Activated B cell treated with CpG ODN at 0.5 μM for 24 hours (primary cell): ENCODE measurements at regions of chr19 and their contacts with region 1.

Region 1: DNA sequence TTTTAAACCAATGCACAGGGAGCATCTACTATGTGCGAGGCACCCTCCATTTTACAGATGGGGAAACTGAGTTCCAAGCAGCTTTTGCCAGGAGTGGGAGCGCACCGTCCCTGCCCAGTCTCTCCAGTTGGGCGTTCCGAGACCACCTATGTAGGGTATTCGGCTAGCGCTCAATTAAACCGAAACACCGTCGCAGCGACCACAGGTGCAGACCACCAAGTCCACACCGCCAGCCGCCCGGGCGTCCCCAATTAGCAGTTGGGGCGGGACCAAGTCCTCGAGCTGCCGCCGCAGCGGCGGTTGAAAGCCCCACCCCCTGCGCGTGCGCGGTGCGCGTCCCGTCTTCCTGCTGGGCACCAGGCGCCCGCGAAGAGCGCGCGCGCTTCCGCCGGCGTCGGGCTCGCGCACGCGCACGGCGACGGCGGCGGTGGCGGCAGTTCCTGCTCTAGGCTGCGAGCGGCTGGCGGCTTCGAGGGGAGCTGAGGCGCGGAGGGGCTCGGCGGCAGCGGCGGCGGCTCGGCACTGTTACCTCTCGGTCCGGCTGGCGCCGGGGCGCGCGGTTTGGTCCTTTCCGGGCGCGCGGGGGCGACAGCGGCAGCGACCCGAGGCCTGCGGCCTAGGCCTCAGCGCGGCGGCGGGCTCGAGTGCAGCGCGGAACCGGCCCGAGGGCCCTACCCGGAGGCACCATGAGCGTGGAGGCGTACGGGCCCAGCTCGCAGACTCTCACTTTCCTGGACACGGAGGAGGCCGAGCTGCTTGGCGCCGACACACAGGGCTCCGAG is at the start of gene UPF1:
- DNase-seq: peak; percentile 97
- ATAC-seq: peak; percentile 84
- H3K4me3 Mint-ChIP-seq: peak within 1 kb of the TSS; percentile 90
- H3K27ac Mint-ChIP-seq: peak within 1 kb of the TSS; percentile 77
- H3K4me1 Mint-ChIP-seq: peaks cover 35% of the 10 kb centered on the region
- H3K27me3 Mint-ChIP-seq: no peaks in the 10 kb centered on the region
- CTCF ChIP-seq: no peak
- total RNA-seq, gene UPF1: 93.2 and 107 TPM in 2 replicates

Region 2: DNA sequence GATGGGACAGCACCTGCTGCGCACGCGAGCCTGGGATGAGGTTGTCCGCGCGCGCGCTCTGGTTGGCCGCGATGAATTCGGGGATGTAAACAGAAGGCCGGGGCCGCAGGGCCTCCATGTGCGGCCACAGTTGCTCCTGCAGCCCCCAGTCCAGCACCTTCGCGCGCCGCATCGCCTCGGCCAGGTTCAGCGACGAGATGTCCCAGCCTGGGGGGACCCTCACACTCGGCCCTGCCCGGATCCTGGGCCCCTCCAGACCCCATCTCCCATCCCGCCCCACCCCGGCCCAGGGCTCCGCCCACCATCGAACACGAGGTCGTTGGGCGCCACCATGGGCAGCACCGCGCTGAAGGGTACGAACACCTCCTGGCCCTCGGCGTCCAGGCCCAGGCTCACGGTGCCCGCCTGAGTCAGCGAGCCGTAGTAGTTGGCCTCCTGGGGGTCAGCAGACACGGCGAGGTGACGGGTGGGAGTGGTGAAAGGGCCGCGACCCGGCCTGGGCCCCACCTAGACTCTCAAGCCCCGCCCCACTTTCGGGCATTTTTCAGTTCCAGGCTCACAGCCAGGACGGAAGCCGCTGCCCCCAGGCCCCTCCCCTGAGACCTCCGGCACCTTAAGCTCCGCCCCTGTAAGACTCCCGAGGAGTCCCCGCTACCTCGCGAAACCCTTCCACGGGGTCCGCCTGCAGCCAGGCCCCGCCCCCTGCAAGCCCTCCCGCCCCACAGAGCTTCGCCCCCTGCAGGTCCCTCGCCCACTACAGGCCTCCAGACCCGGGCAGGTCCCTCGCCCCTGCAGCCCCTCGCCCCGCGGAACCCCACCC is 394.8 kb before region 1 on chr19:
- CTCF ChIA-PET with region 1: no interaction called
- POLR2A ChIA-PET with region 1: interaction called, 3 read pairs
- intact Hi-C with region 1: loop called (anchors 5 kb)
- DNase-seq: peak; percentile 71
- ATAC-seq: peak; percentile 72
- H3K4me3 Mint-ChIP-seq: peak overlapping the region; percentile 78
- H3K27ac Mint-ChIP-seq: no peak overlapping the region
- H3K4me1 Mint-ChIP-seq: peaks cover 38% of the 10 kb centered on the region
- H3K27me3 Mint-ChIP-seq: no peaks in the 10 kb centered on the region
- CTCF ChIP-seq: no peak

Region 3: DNA sequence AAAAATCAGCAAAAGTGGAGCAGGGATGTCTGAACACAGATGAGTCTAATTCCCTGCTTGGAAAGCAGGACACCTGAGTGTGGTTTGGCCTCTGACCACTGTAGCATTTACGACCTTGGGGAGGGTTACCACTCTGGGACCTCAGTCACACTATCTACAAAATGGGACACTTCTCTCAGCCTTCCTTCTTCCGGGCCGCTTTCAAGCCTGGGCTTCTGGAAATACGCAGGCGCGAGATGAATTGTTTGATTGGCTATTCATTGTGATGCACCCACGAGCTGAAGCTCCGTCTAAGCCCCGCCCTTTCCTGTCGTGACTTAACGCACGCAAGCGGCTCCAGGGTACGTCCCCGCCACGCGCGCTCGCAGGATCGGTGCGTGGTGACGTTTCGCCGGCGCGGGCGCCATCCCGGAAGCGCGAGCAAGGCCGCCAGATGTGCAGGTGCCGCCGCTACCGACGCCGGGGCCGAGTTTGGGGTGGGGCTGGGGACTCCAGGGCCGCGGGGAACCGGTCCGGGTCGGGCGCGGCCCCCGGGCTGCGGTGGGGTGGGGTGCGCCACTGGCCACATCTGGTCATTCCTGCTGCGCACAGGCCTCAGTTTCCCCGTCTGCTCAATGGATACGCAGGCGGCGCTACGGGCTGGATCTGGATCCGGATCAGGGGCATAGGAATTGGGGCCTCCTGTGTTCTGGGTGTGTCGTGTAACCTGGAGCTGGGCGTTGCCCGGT is 274.1 kb before region 1 on chr19 and contains the start of gene KXD1:
- CTCF ChIA-PET with region 1: no interaction called
- POLR2A ChIA-PET with region 1: interaction called, 11 read pairs
- intact Hi-C with region 1: no loop called
- DNase-seq: peak; percentile 93
- ATAC-seq: peak; percentile 99
- H3K4me3 Mint-ChIP-seq: peak within 1 kb of the TSS; percentile 87
- H3K27ac Mint-ChIP-seq: peak within 1 kb of the TSS; percentile 89
- H3K4me1 Mint-ChIP-seq: peaks cover 25% of the 10 kb centered on the region
- H3K27me3 Mint-ChIP-seq: no peaks in the 10 kb centered on the region
- CTCF ChIP-seq: no peak
- total RNA-seq, gene KXD1: 82.2 and 88.8 TPM in 2 replicates

Region 4: GRCh38 chr19:18571564-18572300 is 260.0 kb before region 1 on chr19 and contains the start of gene UBA52:
- CTCF ChIA-PET with region 1: no interaction called
- POLR2A ChIA-PET with region 1: interaction called, 15 read pairs
- intact Hi-C with region 1: no loop called
- DNase-seq: peak; percentile 100
- ATAC-seq: peak; percentile 93
- H3K4me3 Mint-ChIP-seq: peak within 1 kb of the TSS; percentile 94
- H3K27ac Mint-ChIP-seq: peak within 1 kb of the TSS; percentile 93
- H3K4me1 Mint-ChIP-seq: peaks cover 30% of the 10 kb centered on the region
- H3K27me3 Mint-ChIP-seq: no peaks in the 10 kb centered on the region
- CTCF ChIP-seq: no peak
- total RNA-seq, gene UBA52: 1,962 and 2,164 TPM in 2 replicates

Region 5: GRCh38 chr19:18700501-18701249 is 131.0 kb before region 1 on chr19:
- CTCF ChIA-PET with region 1: no interaction called
- POLR2A ChIA-PET with region 1: interaction called, 3 read pairs
- intact Hi-C with region 1: loop called (anchors 5 kb)
- DNase-seq: peak; percentile 63
- ATAC-seq: peak; percentile 87
- H3K4me3 Mint-ChIP-seq: peak overlapping the region; percentile 85
- H3K27ac Mint-ChIP-seq: peak overlapping the region; percentile 95
- H3K4me1 Mint-ChIP-seq: peaks cover 46% of the 10 kb centered on the region
- H3K27me3 Mint-ChIP-seq: no peaks in the 10 kb centered on the region
- CTCF ChIP-seq: no peak

Region 6: GRCh38 chr19:18785179-18786128 is 46.3 kb before region 1 on chr19:
- CTCF ChIA-PET with region 1: no interaction called
- POLR2A ChIA-PET with region 1: no interaction called
- intact Hi-C with region 1: loop called (anchors 2 kb)
- DNase-seq: peak; percentile 40
- ATAC-seq: peak; percentile 67
- H3K4me3 Mint-ChIP-seq: peak overlapping the region; percentile 44
- H3K27ac Mint-ChIP-seq: peak overlapping the region; percentile 41
- H3K4me1 Mint-ChIP-seq: peaks cover 42% of the 10 kb centered on the region
- H3K27me3 Mint-ChIP-seq: peaks cover 47% of the 10 kb centered on the region
- CTCF ChIP-seq: no peak

Region 7: GRCh38 chr19:18846862-18847548 is 15.3 kb after region 1 on chr19:
- CTCF ChIA-PET with region 1: interaction called, 13 read pairs
- POLR2A ChIA-PET with region 1: interaction called, 7 read pairs
- intact Hi-C with region 1: no loop called
- DNase-seq: peak; percentile 56
- ATAC-seq: peak; percentile 77
- H3K4me3 Mint-ChIP-seq: no peak overlapping the region
- H3K27ac Mint-ChIP-seq: peak overlapping the region; percentile 46
- H3K4me1 Mint-ChIP-seq: peaks cover 75% of the 10 kb centered on the region
- H3K27me3 Mint-ChIP-seq: no peaks in the 10 kb centered on the region
- CTCF ChIP-seq: peak; percentile 35